ENCODE measurements at regions of chr12 and their contacts with region 1.

Region 1: DNA sequence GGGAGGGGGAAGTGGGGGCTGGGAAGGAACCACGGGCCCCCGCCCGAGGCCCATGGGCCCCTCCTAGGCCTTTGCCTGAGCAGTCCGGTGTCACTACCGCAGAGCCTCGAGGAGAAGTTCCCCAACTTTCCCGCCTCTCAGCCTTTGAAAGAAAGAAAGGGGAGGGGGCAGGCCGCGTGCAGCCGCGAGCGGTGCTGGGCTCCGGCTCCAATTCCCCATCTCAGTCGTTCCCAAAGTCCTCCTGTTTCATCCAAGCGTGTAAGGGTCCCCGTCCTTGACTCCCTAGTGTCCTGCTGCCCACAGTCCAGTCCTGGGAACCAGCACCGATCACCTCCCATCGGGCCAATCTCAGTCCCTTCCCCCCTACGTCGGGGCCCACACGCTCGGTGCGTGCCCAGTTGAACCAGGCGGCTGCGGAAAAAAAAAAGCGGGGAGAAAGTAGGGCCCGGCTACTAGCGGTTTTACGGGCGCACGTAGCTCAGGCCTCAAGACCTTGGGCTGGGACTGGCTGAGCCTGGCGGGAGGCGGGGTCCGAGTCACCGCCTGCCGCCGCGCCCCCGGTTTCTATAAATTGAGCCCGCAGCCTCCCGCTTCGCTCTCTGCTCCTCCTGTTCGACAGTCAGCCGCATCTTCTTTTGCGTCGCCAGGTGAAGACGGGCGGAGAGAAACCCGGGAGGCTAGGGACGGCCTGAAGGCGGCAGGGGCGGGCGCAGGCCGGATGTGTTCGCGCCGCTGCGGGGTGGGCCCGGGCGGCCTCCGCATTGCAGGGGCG is at the start of gene GAPDH:
- DNase-seq: peak; percentile 91
- H3K4me3 ChIP-seq: peak within 1 kb of the TSS; percentile 97
- H3K27ac ChIP-seq: peak within 1 kb of the TSS; percentile 95
- H3K27me3 ChIP-seq: no peaks in the 10 kb centered on the region
- CTCF ChIP-seq: 0 out of 2 replicates have a peak, but pooled peaks have one; percentile 1
- polyA plus RNA-seq, gene GAPDH: 9,160 and 11,356 TPM in 2 replicates

Region 2: GRCh38 chr12:6335451-6336078 is 198.5 kb before region 1 on chr12:
- CTCF ChIA-PET with region 1: interaction called, 5 read pairs
- POLR2A ChIA-PET with region 1: interaction called, 38 read pairs
- DNase-seq: peak; percentile 53
- H3K4me3 ChIP-seq: peak overlapping the region; percentile 58
- H3K27ac ChIP-seq: peak overlapping the region; percentile 100
- H3K27me3 ChIP-seq: no peaks in the 10 kb centered on the region
- CTCF ChIP-seq: peak; percentile 53

Region 3: GRCh38 chr12:6493497-6494257 is 40.4 kb before region 1 on chr12 and contains the start of gene NCAPD2:
- CTCF ChIA-PET with region 1: interaction called, 4 read pairs
- POLR2A ChIA-PET with region 1: interaction called, 33 read pairs
- DNase-seq: peak; percentile 88
- H3K4me3 ChIP-seq: peak within 1 kb of the TSS; percentile 97
- H3K27ac ChIP-seq: peak within 1 kb of the TSS; percentile 97
- H3K27me3 ChIP-seq: no peaks in the 10 kb centered on the region
- CTCF ChIP-seq: peak; percentile 35; the same call in 1 of the 2 replicates
- polyA plus RNA-seq, gene NCAPD2: 36.1 and 38.4 TPM in 2 replicates

Region 4: DNA sequence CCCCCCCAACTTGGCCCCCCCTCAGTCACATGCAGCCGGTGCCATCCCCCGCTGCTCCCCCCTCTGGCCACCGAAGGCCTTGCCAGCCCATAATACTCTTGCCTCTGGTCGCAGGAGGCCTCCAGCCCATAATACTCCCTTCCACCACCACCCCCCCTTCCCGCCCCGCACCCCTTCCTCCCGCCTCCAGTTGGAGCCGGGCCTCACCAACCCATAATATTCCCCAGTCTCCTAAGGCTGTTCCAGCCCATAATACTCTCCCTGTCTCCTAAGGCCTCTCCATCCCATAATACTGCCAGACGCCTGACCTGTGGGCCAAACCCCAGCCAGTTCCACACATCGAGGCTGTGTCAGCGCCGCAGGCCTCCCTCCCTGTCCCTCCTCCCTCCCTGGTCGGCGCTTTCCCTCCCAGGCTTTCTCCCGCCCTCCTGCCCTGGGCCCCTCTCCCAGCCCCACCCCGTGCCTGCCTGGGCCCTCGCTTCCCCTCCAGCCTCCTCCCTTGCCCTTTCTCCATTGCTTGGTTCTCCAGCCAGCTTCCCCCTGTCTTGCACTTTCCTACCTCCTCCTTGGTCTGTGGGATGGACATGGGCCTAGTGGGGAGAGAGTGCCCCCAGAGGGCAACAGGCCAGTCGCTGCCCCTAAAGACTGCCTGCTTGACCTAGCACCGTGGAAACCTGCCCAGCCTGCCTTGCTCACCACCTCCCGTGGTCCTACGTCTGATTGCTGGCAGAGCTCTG is 79.8 kb after region 1 on chr12:
- CTCF ChIA-PET with region 1: no interaction called
- POLR2A ChIA-PET with region 1: interaction called, 13 read pairs
- DNase-seq: peak; percentile 93
- H3K4me3 ChIP-seq: no peak overlapping the region
- H3K27ac ChIP-seq: peak overlapping the region; percentile 65
- H3K27me3 ChIP-seq: no peaks in the 10 kb centered on the region
- CTCF ChIP-seq: 0 out of 2 replicates have a peak, but pooled peaks have one; percentile 5

Region 5: DNA sequence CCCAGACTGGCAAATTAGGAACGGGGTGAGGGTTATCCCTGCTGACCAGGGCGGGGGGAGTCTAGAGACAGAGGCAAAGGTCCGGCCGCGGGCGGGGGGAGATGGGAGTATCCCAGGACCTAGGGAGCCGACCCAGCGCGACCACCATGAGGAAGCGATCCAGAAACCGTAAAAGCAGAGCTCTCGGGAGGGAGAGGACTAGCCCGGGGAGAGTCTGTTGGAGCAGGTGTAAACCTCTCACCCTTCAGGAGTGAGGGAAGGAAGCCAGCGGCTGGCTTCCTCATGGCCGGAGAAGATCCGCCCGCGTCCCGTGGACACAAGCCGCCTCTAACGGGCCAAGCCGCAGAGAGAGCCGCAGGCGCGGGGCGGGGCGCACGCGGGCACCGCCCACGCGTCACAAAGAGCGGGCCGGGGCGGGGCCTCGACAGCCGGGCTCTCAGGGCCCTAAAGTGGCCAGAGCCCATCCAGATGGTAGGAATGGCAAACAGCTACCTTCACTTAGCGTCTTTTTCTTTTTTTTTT is 113.0 kb after region 1 on chr12 and contains the start of gene ACRBP:
- CTCF ChIA-PET with region 1: no interaction called
- POLR2A ChIA-PET with region 1: no interaction called
- DNase-seq: no peak
- H3K4me3 ChIP-seq: peak within 1 kb of the TSS; percentile 55
- H3K27ac ChIP-seq: no peak within 1 kb of the TSS
- H3K27me3 ChIP-seq: peaks cover 5% of the 10 kb centered on the region
- CTCF ChIP-seq: no peak
- polyA plus RNA-seq, gene ACRBP: 0.41 and 0.64 TPM in 2 replicates

Region 6: GRCh38 chr12:6851921-6852650 is 318.0 kb after region 1 on chr12 and contains the start of gene USP5:
- CTCF ChIA-PET with region 1: no interaction called
- POLR2A ChIA-PET with region 1: interaction called, 11 read pairs
- DNase-seq: peak; percentile 99
- H3K4me3 ChIP-seq: peak within 1 kb of the TSS; percentile 97
- H3K27ac ChIP-seq: peak within 1 kb of the TSS; percentile 92
- H3K27me3 ChIP-seq: no peaks in the 10 kb centered on the region
- CTCF ChIP-seq: no peak; the same call in 1 of the 2 replicates
- polyA plus RNA-seq, gene USP5: 47.1 and 54.8 TPM in 2 replicates

Measured in AG04450 (cell line).